GM12878 (cell line): ENCODE measurements at regions of chr12 and their contacts with region 1.

Region 1: GRCh38 chr12:90360270-90360995 is 594.5 kb downstream of the CCER1 start:
- DNase-seq: no peak
- ATAC-seq: no peak
- H3K4me3 ChIP-seq: no peak overlapping the region
- H3K27ac ChIP-seq: no peak overlapping the region
- H3K4me1 ChIP-seq: no peaks in the 10 kb centered on the region
- H3K27me3 ChIP-seq: no peaks in the 10 kb centered on the region
- CTCF ChIP-seq: no peak
- EP300 ChIP-seq: no peak
- POLR2A ChIP-seq: no peak
- RAD21 ChIP-seq: no peak

Region 2: DNA sequence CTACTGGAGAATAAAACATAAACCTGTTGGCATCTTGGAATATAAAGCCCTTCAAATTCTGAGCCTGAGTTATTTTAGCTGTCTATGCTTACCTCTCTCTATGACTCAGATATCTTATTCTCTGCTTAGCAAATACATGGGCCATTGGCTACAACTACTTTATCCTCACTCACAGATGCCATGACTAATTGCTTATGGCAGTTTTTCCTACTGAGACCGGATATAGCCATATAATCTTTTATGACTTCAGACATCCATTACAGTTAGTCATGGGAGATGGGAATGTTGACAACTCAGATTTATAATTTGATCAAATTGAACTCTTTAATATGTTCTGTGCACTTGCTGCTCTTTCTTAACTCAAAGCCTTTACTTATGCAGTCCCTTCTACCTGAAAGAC is 149.4 kb before region 1 on chr12:
- CTCF ChIA-PET with region 1: no interaction called
- POLR2A ChIA-PET with region 1: no interaction called
- RAD21 ChIA-PET with region 1: no interaction called
- SMC1A ChIA-PET with region 1: no interaction called
- in situ Hi-C with region 1: no loop called
- intact Hi-C with region 1: loop called (anchors 5 kb)
- DNase-seq: no peak
- ATAC-seq: no peak
- H3K4me3 ChIP-seq: no peak overlapping the region
- H3K27ac ChIP-seq: no peak overlapping the region
- H3K4me1 ChIP-seq: no peaks in the 10 kb centered on the region
- H3K27me3 ChIP-seq: no peaks in the 10 kb centered on the region
- CTCF ChIP-seq: no peak
- EP300 ChIP-seq: no peak
- POLR2A ChIP-seq: no peak
- RAD21 ChIP-seq: no peak

Region 3: DNA sequence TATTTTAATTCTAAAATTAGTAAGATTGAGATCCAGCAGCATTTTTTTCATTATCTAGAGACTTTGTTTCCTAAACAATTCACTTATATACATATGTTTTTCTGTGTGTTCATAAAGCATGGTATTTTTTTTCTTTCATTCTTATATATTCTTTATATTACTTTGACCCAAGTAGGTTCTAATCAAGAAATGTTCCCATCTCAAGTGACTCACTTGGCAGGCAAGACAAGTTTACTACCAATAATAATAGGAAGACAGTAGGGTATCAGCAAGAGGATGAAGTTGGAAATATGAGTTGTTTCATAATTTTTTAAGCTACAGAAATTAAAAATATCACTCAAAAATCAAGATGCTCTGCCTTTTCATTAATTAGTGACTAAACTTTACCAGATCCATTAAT is 38.4 kb before region 1 on chr12:
- CTCF ChIA-PET with region 1: no interaction called
- POLR2A ChIA-PET with region 1: no interaction called
- RAD21 ChIA-PET with region 1: no interaction called
- SMC1A ChIA-PET with region 1: no interaction called
- in situ Hi-C with region 1: no loop called
- intact Hi-C with region 1: no loop called
- DNase-seq: no peak
- ATAC-seq: no peak
- H3K4me3 ChIP-seq: no peak overlapping the region
- H3K27ac ChIP-seq: no peak overlapping the region
- H3K4me1 ChIP-seq: no peaks in the 10 kb centered on the region
- H3K27me3 ChIP-seq: no peaks in the 10 kb centered on the region
- CTCF ChIP-seq: no peak
- EP300 ChIP-seq: no peak
- POLR2A ChIP-seq: no peak
- RAD21 ChIP-seq: no peak